ENCODE measurements at regions of chr2 and their contacts with region 1.

Region 1: GRCh38 chr2:96116879-96117697 is 717 bp upstream of the ADRA2B start:
- DNase-seq: peak; percentile 54
- H3K4me3 Mint-ChIP-seq: peak overlapping the region; percentile 72
- H3K27ac Mint-ChIP-seq: no peak overlapping the region
- H3K4me1 Mint-ChIP-seq: peaks cover 8% of the 10 kb centered on the region
- H3K27me3 Mint-ChIP-seq: peaks cover 33% of the 10 kb centered on the region

Region 2: GRCh38 chr2:96024336-96025193 is 92.5 kb before region 1 on chr2:
- CTCF ChIA-PET with region 1: interaction called, 35 read pairs
- intact Hi-C with region 1: no loop called
- DNase-seq: no peak
- H3K4me3 Mint-ChIP-seq: no peak overlapping the region
- H3K27ac Mint-ChIP-seq: no peak overlapping the region
- H3K4me1 Mint-ChIP-seq: peaks cover 2% of the 10 kb centered on the region
- H3K27me3 Mint-ChIP-seq: no peaks in the 10 kb centered on the region

Region 3: DNA sequence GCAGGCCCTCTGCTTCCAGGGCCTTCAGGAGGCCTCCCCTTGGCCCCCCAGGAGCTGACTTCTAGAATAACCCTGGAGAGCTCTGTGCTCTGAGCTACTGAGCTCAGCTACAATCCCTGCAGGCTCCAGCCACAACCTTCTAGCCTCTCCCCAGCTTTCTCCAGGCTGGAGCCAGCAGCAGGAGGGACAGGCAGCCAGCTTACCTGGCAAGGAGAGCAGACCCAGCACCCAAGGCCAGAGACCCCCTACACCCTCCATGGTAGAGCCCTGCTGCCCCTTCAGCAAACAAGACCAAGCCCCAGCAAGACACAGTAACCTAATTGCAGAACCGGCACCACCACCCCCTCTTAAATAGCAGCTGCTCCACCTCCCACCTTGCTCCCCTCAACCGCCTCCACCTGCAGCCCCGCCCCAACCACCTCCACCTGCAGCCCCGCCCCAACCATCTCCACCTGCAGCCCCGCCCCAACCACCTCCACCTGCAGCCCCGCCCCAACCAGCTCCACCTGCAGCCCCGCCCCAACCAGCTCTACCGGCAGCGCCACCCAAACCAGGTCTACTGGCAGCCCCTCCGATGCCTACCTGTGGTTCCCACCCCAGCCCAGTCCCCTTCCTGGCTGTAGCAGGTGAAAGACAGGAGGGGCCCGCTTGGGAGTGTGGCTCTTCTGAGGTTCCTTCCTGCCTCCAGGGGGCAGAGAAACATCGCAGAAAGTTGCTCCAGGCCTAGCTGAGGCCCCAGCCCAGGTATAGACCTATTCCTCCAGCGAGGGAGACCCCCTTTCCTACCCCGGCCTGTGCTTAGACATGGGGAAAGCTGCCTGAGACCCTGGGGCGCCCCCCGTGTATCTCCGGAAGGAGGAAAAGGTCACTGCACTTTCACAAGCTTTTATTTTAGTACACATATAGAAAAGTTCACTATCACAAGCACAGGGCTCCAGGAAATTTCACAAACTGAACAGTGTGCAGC is 21.4 kb after region 1 on chr2 and contains the start of gene ASTL:
- CTCF ChIA-PET with region 1: interaction called, 20 read pairs
- intact Hi-C with region 1: no loop called
- DNase-seq: peak; percentile 88
- H3K4me3 Mint-ChIP-seq: no peak within 1 kb of the TSS
- H3K27ac Mint-ChIP-seq: peak within 1 kb of the TSS; percentile 82
- H3K4me1 Mint-ChIP-seq: peaks cover 24% of the 10 kb centered on the region
- H3K27me3 Mint-ChIP-seq: no peaks in the 10 kb centered on the region
- total RNA-seq, gene ASTL: 2.5 to 2.6 TPM